B cell (primary cell): ENCODE measurements at regions of chr20 and their contacts with region 1.

Region 1: DNA sequence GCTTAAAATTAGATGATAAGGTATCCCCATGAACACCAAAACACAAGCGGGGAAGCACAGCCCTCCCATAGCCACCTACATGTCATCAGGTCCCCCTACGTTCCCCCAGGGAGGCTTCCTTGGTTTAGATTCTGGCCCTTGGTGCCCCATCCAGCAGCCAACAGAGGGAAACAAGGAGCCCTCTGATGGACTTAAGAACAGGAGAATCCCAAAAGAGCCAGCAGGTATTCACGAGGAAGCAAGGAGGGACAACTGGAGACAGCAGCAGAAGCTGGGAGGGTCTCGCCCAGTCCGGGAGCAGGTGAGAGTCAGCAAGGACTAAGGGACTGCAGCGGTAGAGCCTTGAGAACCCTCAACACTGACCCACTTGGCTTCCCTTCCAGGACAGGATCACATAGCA is 58.4 kb upstream of the TOP1 start:
- DNase-seq: no peak
- ATAC-seq: no peak
- H3K4me3 ChIP-seq: no peak overlapping the region
- H3K4me3 Mint-ChIP-seq: no peak overlapping the region
- H3K27ac ChIP-seq: no peak overlapping the region
- H3K27ac Mint-ChIP-seq: no peak overlapping the region
- H3K4me1 ChIP-seq: peaks cover 0 to 9% of the 10 kb centered on the region in 2 donors
- H3K4me1 Mint-ChIP-seq: peaks cover 12% of the 10 kb centered on the region
- H3K27me3 ChIP-seq: peaks cover 0 to 5% (median 2%) of the 10 kb centered on the region in 4 experiments
- H3K27me3 Mint-ChIP-seq: peaks cover 4% of the 10 kb centered on the region
- CTCF ChIP-seq: no peak

Region 2: GRCh38 chr20:40908309-40908708 is 61.9 kb before region 1 on chr20:
- CTCF ChIA-PET with region 1: no interaction called
- POLR2A ChIA-PET with region 1: no interaction called
- intact Hi-C with region 1: no loop called
- DNase-seq: no peak
- ATAC-seq: no peak
- H3K4me3 ChIP-seq: no peak overlapping the region
- H3K4me3 Mint-ChIP-seq: no peak overlapping the region
- H3K27ac ChIP-seq: no peak overlapping the region
- H3K27ac Mint-ChIP-seq: no peak overlapping the region
- H3K4me1 ChIP-seq: no peaks in the 10 kb centered on the region
- H3K4me1 Mint-ChIP-seq: no peaks in the 10 kb centered on the region
- H3K27me3 ChIP-seq: no peaks in the 10 kb centered on the region
- H3K27me3 Mint-ChIP-seq: no peaks in the 10 kb centered on the region
- CTCF ChIP-seq: no peak

Region 3: GRCh38 chr20:40931410-40932044 is 38.7 kb before region 1 on chr20:
- CTCF ChIA-PET with region 1: no interaction called
- POLR2A ChIA-PET with region 1: no interaction called
- intact Hi-C with region 1: no loop called
- DNase-seq: no peak
- ATAC-seq: no peak
- H3K4me3 ChIP-seq: no peak overlapping the region
- H3K4me3 Mint-ChIP-seq: no peak overlapping the region
- H3K27ac ChIP-seq: no peak overlapping the region
- H3K27ac Mint-ChIP-seq: no peak overlapping the region
- H3K4me1 ChIP-seq: no peaks in the 10 kb centered on the region
- H3K4me1 Mint-ChIP-seq: peaks cover 11% of the 10 kb centered on the region
- H3K27me3 ChIP-seq: no peaks in the 10 kb centered on the region
- H3K27me3 Mint-ChIP-seq: peaks cover 3% of the 10 kb centered on the region
- CTCF ChIP-seq: no peak

Region 4: DNA sequence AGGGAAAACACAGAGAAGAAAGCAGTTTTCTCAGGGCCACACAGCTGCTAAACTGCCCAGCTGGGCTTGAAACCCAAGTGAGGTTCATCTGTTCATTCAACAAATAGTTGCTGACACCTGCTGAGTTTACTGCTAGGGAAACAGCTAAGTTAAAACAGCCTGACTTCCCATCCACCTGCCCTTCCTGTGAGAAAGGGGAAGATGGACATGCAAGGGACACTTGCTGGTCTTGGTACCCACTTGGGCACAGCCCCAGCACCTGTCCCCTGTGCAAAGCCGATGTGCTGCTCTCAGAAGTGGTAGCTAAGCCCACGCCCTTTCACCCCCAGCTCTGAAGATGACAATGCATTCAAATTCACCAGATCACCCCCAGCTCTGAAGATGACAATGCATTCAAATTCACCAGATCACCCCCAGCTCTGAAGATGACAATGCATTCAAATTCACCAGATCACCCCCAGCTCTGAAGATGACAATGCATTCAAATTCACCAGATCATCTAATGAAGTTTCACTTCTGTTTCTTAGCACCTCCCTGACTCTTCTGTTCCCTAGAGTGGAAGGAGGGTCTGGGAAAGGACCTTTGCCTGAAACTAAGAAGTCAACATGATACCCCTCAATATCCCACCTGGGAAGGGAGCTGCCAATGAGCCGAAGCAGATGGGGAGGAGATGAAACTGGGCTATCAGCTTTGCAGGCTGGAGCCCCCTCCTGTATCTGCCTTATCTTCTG is 12.4 kb after region 1 on chr20:
- CTCF ChIA-PET with region 1: interaction called, 45 read pairs
- POLR2A ChIA-PET with region 1: interaction called, 15 read pairs
- intact Hi-C with region 1: no loop called
- DNase-seq: no peak
- ATAC-seq: no peak
- H3K4me3 ChIP-seq: no peak overlapping the region
- H3K4me3 Mint-ChIP-seq: no peak overlapping the region
- H3K27ac ChIP-seq: no peak overlapping the region
- H3K27ac Mint-ChIP-seq: no peak overlapping the region
- H3K4me1 ChIP-seq: peaks cover 20% of the 10 kb centered on the region in 2 donors
- H3K4me1 Mint-ChIP-seq: peaks cover 15% of the 10 kb centered on the region
- H3K27me3 ChIP-seq: no peaks in the 10 kb centered on the region
- H3K27me3 Mint-ChIP-seq: no peaks in the 10 kb centered on the region
- CTCF ChIP-seq: no peak

Region 5: DNA sequence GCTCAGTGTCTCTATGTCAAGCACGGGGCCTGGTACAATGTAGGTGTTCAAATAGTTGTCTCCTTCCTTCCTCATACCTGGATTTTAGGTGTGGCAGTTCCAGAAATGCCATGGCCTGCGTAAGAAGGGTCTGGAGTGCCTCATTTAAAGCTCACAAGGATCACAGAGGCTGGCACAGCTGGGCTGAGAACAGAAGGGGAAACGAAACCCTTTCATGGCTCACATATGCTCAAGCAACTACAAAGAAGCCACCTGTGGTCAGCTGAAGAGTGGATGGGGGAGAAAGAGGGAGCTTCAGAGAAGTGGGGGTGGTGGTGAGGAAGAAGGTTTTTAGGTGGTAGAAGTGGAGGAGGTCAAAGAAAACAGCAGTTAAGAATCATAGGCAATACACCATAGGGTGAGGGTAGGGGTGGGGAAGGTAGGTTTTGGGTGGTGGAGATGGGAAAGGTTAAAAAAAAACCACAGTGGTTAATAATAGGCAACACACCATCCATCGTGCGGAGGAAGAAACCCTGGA is 41.4 kb after region 1 on chr20:
- CTCF ChIA-PET with region 1: interaction called, 7 read pairs
- POLR2A ChIA-PET with region 1: no interaction called
- intact Hi-C with region 1: loop called (anchors 1 kb)
- DNase-seq: peak; percentile 86
- ATAC-seq: peak; percentile 98
- H3K4me3 ChIP-seq: peak overlapping the region in 1 of 5 experiments; percentile 35
- H3K4me3 Mint-ChIP-seq: peak overlapping the region; percentile 52
- H3K27ac ChIP-seq: peak overlapping the region in 1 of 2 donors; percentile 4
- H3K27ac Mint-ChIP-seq: peak overlapping the region; percentile 47
- H3K4me1 ChIP-seq: peaks cover 36 to 43% of the 10 kb centered on the region in 2 donors
- H3K4me1 Mint-ChIP-seq: peaks cover 40% of the 10 kb centered on the region
- H3K27me3 ChIP-seq: no peaks in the 10 kb centered on the region
- H3K27me3 Mint-ChIP-seq: no peaks in the 10 kb centered on the region
- CTCF ChIP-seq: no peak

Region 6: DNA sequence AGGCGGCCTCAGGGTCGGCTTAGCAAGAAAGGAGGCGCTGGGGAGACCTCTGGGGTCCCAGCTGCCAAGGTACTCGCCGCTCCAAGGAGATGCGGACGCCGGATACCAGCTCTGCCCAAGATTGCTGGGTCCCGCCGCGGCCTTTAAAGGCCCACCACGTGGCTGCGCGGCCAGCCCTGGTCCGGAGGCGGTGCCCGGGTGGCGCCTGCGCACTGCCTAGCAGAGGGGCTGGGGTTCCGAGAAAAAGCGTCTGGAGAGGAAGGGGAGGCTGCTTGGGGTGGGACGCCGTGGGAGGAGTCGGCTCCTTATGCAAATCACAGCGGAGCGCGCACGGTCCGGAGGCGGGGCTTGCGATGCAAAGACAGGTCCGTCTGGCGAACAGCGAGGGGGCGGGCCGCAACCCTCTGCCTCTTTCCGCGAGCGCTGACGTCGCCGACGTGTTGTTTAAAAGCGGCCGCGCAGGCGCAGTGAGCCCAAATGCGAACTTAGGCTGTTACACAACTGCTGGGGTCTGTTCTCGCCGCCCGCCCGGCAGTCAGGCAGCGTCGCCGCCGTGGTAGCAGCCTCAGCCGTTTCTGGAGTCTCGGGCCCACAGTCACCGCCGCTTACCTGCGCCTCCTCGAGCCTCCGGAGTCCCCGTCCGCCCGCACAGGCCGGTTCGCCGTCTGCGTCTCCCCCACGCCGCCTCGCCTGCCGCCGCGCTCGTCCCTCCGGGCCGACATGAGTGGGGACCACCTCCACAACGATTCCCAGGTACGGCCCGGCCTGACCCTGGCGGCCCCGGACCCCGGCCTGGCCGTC is 58.3 kb after region 1 on chr20 and contains the start of gene TOP1:
- CTCF ChIA-PET with region 1: interaction called, 7 read pairs
- POLR2A ChIA-PET with region 1: interaction called, 4 read pairs
- intact Hi-C with region 1: loop called (anchors 2 kb)
- DNase-seq: peak; percentile 100
- ATAC-seq: peak; percentile 98
- H3K4me3 ChIP-seq: peak within 1 kb of the TSS; percentile 73 to 94 (median 93)
- H3K4me3 Mint-ChIP-seq: peak within 1 kb of the TSS; percentile 93
- H3K27ac ChIP-seq: peak within 1 kb of the TSS; percentile 71 to 95
- H3K27ac Mint-ChIP-seq: peak within 1 kb of the TSS; percentile 97
- H3K4me1 ChIP-seq: peaks cover 38 to 40% of the 10 kb centered on the region in 2 donors
- H3K4me1 Mint-ChIP-seq: peaks cover 53% of the 10 kb centered on the region
- H3K27me3 ChIP-seq: no peaks in the 10 kb centered on the region
- H3K27me3 Mint-ChIP-seq: no peaks in the 10 kb centered on the region
- CTCF ChIP-seq: no peak
- total RNA-seq, gene TOP1: 44.9 and 45.9 TPM in 2 replicates

Region 7: GRCh38 chr20:41064377-41064776 is 94.2 kb after region 1 on chr20:
- CTCF ChIA-PET with region 1: interaction called, 28 read pairs
- POLR2A ChIA-PET with region 1: no interaction called
- intact Hi-C with region 1: loop called (anchors 1 kb)
- DNase-seq: peak; percentile 39
- ATAC-seq: peak; percentile 57
- H3K4me3 ChIP-seq: no peak overlapping the region
- H3K4me3 Mint-ChIP-seq: peak overlapping the region; percentile 24
- H3K27ac ChIP-seq: no peak overlapping the region
- H3K27ac Mint-ChIP-seq: peak overlapping the region; percentile 27
- H3K4me1 ChIP-seq: peaks cover 19 to 23% of the 10 kb centered on the region in 2 donors
- H3K4me1 Mint-ChIP-seq: peaks cover 46% of the 10 kb centered on the region
- H3K27me3 ChIP-seq: no peaks in the 10 kb centered on the region
- H3K27me3 Mint-ChIP-seq: no peaks in the 10 kb centered on the region
- CTCF ChIP-seq: no peak

Region 8: DNA sequence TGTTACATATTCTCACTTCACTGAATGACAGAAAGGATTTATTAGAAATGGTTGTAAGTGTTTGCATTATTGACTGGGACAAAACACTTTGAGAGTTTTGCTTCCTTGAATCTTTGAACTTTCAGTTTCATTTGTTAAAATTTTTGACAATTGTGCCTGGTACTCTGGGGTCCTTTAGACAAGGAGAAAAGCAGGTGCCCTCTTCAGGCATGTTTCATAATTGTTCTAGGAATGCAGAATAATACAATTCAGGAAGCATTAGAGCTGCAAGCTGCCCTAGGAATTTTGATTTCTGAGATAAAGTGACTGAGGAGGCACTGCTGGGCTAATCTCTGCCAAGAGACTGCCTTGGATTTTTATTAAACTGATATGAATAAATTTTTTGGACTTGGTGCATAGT is 108.1 kb after region 1 on chr20:
- CTCF ChIA-PET with region 1: interaction called, 34 read pairs
- POLR2A ChIA-PET with region 1: no interaction called
- intact Hi-C with region 1: loop called (anchors 1 kb)
- DNase-seq: peak; percentile 56
- ATAC-seq: peak; percentile 51
- H3K4me3 ChIP-seq: no peak overlapping the region
- H3K4me3 Mint-ChIP-seq: peak overlapping the region; percentile 35
- H3K27ac ChIP-seq: no peak overlapping the region
- H3K27ac Mint-ChIP-seq: no peak overlapping the region
- H3K4me1 ChIP-seq: peaks cover 11 to 14% of the 10 kb centered on the region in 2 donors
- H3K4me1 Mint-ChIP-seq: peaks cover 34% of the 10 kb centered on the region
- H3K27me3 ChIP-seq: no peaks in the 10 kb centered on the region
- H3K27me3 Mint-ChIP-seq: no peaks in the 10 kb centered on the region
- CTCF ChIP-seq: no peak

Region 9: DNA sequence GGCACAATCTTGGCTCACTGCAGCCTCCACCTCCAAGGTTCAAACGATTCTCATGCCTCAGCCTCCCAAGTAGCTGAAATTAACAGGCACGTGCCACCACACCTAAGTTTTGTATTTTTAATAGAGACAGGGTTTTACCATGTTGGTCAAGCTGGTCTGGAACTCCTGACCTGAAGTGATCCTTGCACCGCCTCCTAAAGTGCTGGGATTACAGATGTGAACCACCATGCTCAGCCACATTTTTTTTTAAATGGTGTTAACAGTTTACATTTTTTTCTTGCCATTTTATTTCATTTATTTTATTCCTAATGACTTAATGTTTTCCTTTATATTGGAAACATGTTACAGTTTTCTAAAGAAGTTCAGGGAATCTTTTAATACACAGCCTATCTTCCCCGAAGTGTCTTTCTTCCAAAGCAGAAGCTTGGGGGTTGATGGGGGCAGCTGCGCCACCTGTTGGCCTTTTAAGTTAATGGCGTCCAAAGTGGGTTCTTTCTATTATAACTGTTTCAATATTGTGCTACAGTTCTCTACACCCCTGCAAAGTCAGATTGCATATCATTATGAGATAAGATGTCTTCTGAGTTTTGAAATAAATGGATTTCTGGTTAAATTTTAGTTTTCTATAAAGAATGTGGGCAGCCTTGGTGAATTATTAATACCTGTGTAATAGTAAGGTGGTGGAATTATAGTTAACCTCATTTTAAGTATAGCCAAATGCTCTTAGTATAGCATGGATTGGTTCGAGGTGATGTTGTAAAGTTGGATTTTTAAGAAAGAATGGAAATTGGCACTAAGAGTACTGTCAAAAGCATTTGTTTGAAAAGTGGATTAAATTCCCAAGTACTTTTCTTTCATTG is 125.1 kb after region 1 on chr20:
- CTCF ChIA-PET with region 1: interaction called, 204 read pairs
- POLR2A ChIA-PET with region 1: no interaction called
- intact Hi-C with region 1: loop called (anchors 1 kb)
- DNase-seq: peak; percentile 76
- ATAC-seq: peak; percentile 74
- H3K4me3 ChIP-seq: no peak overlapping the region
- H3K4me3 Mint-ChIP-seq: no peak overlapping the region
- H3K27ac ChIP-seq: no peak overlapping the region
- H3K27ac Mint-ChIP-seq: no peak overlapping the region
- H3K4me1 ChIP-seq: no peaks in the 10 kb centered on the region
- H3K4me1 Mint-ChIP-seq: no peaks in the 10 kb centered on the region
- H3K27me3 ChIP-seq: no peaks in the 10 kb centered on the region
- H3K27me3 Mint-ChIP-seq: no peaks in the 10 kb centered on the region
- CTCF ChIP-seq: peak; percentile 96

Region 10: GRCh38 chr20:41213150-41213820 is 243.1 kb after region 1 on chr20:
- CTCF ChIA-PET with region 1: no interaction called
- POLR2A ChIA-PET with region 1: no interaction called
- intact Hi-C with region 1: no loop called
- DNase-seq: no peak
- ATAC-seq: no peak
- H3K4me3 ChIP-seq: no peak overlapping the region
- H3K4me3 Mint-ChIP-seq: no peak overlapping the region
- H3K27ac ChIP-seq: no peak overlapping the region
- H3K27ac Mint-ChIP-seq: no peak overlapping the region
- H3K4me1 ChIP-seq: no peaks in the 10 kb centered on the region
- H3K4me1 Mint-ChIP-seq: no peaks in the 10 kb centered on the region
- H3K27me3 ChIP-seq: no peaks in the 10 kb centered on the region
- H3K27me3 Mint-ChIP-seq: no peaks in the 10 kb centered on the region
- CTCF ChIP-seq: no peak